ENCODE measurements at regions of chr7 and their contacts with region 1.

Region 1: GRCh38 chr7:149662591-149663095 is 110.7 kb downstream of the ZNF467 start:
- DNase-seq: peak; percentile 17 to 72 (median 38)
- ATAC-seq: peak; percentile 89
- H3K4me3 ChIP-seq: no peak overlapping the region
- H3K4me3 Mint-ChIP-seq: no peak overlapping the region
- H3K27ac ChIP-seq: no peak overlapping the region
- H3K27ac Mint-ChIP-seq: no peak overlapping the region
- H3K4me1 ChIP-seq: no peaks in the 10 kb centered on the region
- H3K4me1 Mint-ChIP-seq: no peaks in the 10 kb centered on the region
- H3K27me3 ChIP-seq: no peaks in the 10 kb centered on the region
- H3K27me3 Mint-ChIP-seq: peaks cover 27 to 57% (median 42%) of the 10 kb centered on the region in 5 donors

Region 2: DNA sequence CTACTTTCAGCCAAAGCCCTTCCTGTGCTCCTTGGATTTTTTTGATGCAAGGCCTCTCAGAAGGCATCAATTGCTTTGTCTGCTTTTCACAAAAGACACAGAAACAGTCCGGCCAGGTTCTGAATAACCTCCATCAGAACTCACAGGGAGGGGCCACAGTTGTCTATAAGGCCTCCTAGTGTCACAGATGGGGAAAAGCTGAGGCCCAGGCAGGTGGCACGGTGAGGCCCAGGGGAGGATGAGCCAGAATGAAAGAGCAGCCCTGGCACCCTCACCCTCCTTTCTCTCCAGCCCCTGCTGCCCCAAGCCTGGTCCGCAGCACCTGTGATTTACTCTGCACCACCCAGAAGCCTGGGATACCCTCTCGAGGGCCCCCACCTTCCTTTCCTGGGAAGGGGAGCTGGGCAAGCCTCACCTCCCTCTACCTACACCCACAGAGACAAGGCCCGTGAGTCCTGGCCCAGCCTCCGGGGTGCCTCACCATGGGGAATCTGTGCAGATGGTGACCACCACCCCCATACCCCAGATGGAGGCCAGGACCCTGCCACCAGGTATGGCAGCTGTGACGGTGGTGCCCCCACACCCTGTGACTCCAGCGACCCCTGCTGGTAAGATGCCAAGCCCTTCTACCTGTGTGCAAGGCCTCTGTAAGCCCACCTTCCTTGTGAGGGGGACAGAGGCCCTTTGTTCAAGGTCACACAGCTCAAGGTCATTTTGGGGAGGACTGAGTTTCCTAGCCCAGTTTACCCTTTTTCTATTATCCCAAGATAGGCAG is 136.9 kb after region 1 on chr7:
- CTCF ChIA-PET with region 1: interaction called, 19 read pairs
- POLR2A ChIA-PET with region 1: no interaction called
- intact Hi-C with region 1: loop called (anchors 1 kb)
- DNase-seq: peak; percentile 32 to 73 (median 58)
- ATAC-seq: peak; percentile 58
- H3K4me3 ChIP-seq: no peak overlapping the region
- H3K4me3 Mint-ChIP-seq: no peak overlapping the region
- H3K27ac ChIP-seq: no peak overlapping the region
- H3K27ac Mint-ChIP-seq: peak overlapping the region in 1 of 9 donors; percentile 28
- H3K4me1 ChIP-seq: no peaks in the 10 kb centered on the region
- H3K4me1 Mint-ChIP-seq: no peaks in the 10 kb centered on the region
- H3K27me3 ChIP-seq: no peaks in the 10 kb centered on the region
- H3K27me3 Mint-ChIP-seq: no peaks in the 10 kb centered on the region

Measured in naive thymus-derived CD4-positive, alpha-beta T cell (primary cell).